HepG2 (cell line): ENCODE measurements at regions of chr2 and their contacts with region 1.

Region 1: GRCh38 chr2:21042958-21043743 is 722 bp downstream of the APOB start:
- DNase-seq: peak; percentile 98
- ATAC-seq: peak; percentile 66
- H3K4me3 ChIP-seq: peak overlapping the region; percentile 88 to 96 (median 91)
- H3K27ac ChIP-seq: peak overlapping the region; percentile 99
- H3K4me1 ChIP-seq: peaks cover 76% of the 10 kb centered on the region
- H3K27me3 ChIP-seq: no peaks in the 10 kb centered on the region; a peak in 1 of 5 replicates
- CTCF ChIP-seq: peak; percentile 95
- EP300 ChIP-seq: peak; percentile 98 to 99
- POLR2A ChIP-seq: peak in 1 of 2 experiments; percentile 94; a peak in 2 of 4 replicates
- RAD21 ChIP-seq: peak; percentile 99

Region 2: GRCh38 chr2:21025690-21026478 is 17.3 kb before region 1 on chr2:
- CTCF ChIA-PET with region 1: no interaction called
- POLR2A ChIA-PET with region 1: interaction called, 124 read pairs
- in situ Hi-C with region 1: no loop called
- intact Hi-C with region 1: no loop called
- DNase-seq: no peak
- ATAC-seq: peak; percentile 1
- H3K4me3 ChIP-seq: no peak overlapping the region
- H3K27ac ChIP-seq: peak overlapping the region; percentile 31
- H3K4me1 ChIP-seq: peaks cover 92% of the 10 kb centered on the region
- H3K27me3 ChIP-seq: no peaks in the 10 kb centered on the region
- CTCF ChIP-seq: no peak
- EP300 ChIP-seq: no peak
- POLR2A ChIP-seq: peak; percentile 63 to 72
- RAD21 ChIP-seq: no peak

Region 3: DNA sequence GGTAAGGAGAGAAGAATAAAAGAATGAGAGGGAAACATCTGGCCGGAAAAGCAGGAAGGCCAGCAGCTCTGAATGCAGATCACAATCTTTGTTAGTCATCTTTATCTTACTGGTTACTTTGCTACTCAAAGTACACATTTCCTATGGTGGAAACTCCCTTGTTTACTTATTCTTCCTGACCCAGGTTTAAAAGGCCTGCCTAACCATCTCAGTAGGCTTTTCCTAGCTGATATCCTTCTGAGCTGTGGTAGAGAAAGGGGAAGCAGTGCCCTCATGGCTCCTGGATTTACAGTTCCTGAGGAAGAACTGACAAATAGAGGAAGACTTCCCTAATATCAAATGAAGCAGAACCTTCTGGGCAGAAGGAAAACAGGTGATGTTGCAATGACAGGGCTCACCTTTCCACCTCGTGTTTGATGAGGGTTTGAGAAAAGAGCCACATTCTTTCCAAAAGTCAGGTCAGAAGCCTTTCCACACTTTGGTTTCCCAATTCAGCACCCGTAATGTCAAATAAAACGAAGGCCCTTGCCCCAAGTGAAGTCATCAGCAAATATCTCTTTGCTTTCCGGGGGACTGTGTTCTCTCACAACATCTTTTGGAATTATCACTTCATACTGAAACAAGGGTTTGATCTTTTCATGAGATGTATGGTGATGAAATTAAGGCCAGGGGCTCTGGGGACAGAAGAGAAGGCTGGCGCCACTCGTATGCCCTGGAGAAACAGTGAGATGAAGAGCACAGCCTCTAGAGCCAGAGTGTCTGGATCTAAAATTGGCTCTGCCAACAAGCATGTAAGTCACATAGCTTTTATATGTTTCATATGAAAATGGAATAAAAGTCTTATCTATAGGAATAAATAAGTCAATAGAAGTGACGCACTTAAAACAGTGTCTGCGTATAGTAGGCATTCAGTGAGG is 27.4 kb after region 1 on chr2:
- CTCF ChIA-PET with region 1: interaction called, 15 read pairs
- POLR2A ChIA-PET with region 1: interaction called, 236 read pairs
- in situ Hi-C with region 1: no loop called
- intact Hi-C with region 1: loop called (anchors 1 kb)
- DNase-seq: peak; percentile 97
- ATAC-seq: peak; percentile 86
- H3K4me3 ChIP-seq: peak overlapping the region; percentile 35 to 59 (median 45)
- H3K27ac ChIP-seq: peak overlapping the region; percentile 73
- H3K4me1 ChIP-seq: peaks cover 77% of the 10 kb centered on the region
- H3K27me3 ChIP-seq: no peaks in the 10 kb centered on the region
- CTCF ChIP-seq: 0 out of 2 replicates have a peak, but pooled peaks have one; percentile 24
- EP300 ChIP-seq: peak; percentile 61 to 83; a peak in 3 of 4 replicates
- POLR2A ChIP-seq: peak; percentile 82 to 88
- RAD21 ChIP-seq: no peak

Region 4: DNA sequence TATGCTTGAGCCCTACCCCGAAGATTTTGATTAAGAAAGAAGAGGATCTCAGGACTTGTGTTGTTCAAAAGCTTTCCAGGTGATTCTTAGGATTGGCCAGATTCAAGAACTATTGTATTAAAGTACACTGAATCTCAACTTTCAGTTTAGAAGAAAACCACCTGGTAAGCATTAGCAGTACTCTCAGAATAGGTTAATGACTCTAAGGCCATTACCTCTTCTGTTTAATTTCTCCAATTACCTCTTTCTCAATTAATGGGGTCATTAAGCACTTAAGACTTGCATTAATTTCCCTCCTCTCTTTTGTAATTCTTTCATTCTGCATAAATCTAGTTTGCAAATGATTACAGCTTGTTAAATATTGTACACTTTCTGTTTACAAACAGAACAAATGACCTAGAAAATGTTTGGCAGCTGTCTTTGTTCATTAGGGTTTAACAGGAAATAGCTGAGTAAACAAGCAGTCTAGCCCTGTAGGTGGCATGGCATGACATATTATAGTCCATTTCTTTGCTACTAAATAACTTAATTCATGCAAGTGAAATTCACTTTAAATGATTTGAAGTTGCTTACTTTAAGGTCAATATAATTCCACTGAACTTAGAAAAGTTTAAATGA is 60.2 kb after region 1 on chr2:
- CTCF ChIA-PET with region 1: interaction called, 4 read pairs
- POLR2A ChIA-PET with region 1: interaction called, 50 read pairs
- in situ Hi-C with region 1: no loop called
- intact Hi-C with region 1: no loop called
- DNase-seq: peak; percentile 30
- ATAC-seq: peak; percentile 73
- H3K4me3 ChIP-seq: peak overlapping the region in 1 of 3 experiments; percentile 0; a peak in 1 of 6 replicates
- H3K27ac ChIP-seq: no peak overlapping the region
- H3K4me1 ChIP-seq: peaks cover 50% of the 10 kb centered on the region
- H3K27me3 ChIP-seq: no peaks in the 10 kb centered on the region
- CTCF ChIP-seq: 0 out of 2 replicates have a peak, but pooled peaks have one; percentile 22
- EP300 ChIP-seq: peak in 1 of 2 experiments; percentile 62; a peak in 1 of 4 replicates
- POLR2A ChIP-seq: no peak
- RAD21 ChIP-seq: no peak

Region 5: DNA sequence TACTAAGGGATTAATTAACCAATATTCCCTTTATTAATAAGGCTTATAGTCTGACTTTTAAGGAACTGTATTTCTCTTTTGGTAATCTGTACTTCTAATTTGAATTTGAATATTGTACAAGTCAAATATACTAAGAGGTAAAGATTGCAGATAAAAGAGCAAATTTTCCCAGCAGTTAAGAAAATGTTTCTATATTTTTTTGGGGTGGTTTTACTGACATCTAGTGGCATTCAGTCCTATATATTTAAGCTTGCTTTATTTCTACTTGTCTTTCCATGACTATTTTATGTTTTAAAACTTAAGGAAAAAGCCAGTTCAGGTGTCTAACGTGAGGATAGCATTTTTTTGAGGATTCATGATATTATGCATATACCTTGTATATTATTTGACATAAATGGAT is 122.2 kb after region 1 on chr2:
- CTCF ChIA-PET with region 1: interaction called, 13 read pairs
- POLR2A ChIA-PET with region 1: interaction called, 9 read pairs
- in situ Hi-C with region 1: no loop called
- intact Hi-C with region 1: loop called (anchors 1 kb)
- DNase-seq: peak; percentile 42
- ATAC-seq: 0 out of 3 replicates have a peak, but pooled peaks have one; percentile 36
- H3K4me3 ChIP-seq: no peak overlapping the region
- H3K27ac ChIP-seq: no peak overlapping the region
- H3K4me1 ChIP-seq: no peaks in the 10 kb centered on the region
- H3K27me3 ChIP-seq: no peaks in the 10 kb centered on the region
- CTCF ChIP-seq: peak; percentile 57
- EP300 ChIP-seq: no peak
- POLR2A ChIP-seq: no peak
- RAD21 ChIP-seq: peak; percentile 40; the same call in 1 of the 2 replicates